ENCODE measurements at regions of chr5 and their contacts with region 1.

Region 1: GRCh38 chr5:149345147-149345875 is at the start of gene GRPEL2:
- DNase-seq: peak; percentile 97
- ATAC-seq: peak; percentile 93
- H3K4me3 Mint-ChIP-seq: peak within 1 kb of the TSS; percentile 95
- H3K27ac Mint-ChIP-seq: peak within 1 kb of the TSS; percentile 98
- H3K4me1 Mint-ChIP-seq: peaks cover 51% of the 10 kb centered on the region
- H3K27me3 Mint-ChIP-seq: no peaks in the 10 kb centered on the region
- CTCF ChIP-seq: no peak
- total RNA-seq, gene GRPEL2: 31.0 to 31.1 TPM

Region 2: DNA sequence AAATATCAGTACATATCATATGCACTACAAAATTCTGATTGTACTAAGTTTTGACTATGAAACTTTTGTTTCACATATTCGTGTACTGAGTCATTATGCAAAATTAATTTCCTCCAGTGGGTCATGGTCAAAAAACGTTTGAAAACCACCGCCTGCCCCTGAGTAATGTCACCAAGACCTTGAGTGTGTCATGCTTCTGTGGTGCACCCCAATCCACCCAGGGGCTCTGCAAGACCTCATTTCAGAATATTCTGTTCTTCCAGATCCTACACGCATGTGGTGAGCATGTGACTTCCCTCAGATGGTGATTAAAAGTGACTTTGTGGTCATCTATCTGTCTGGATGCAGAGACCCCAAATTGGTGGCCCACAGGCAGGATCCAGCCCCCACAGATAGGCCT is 173.1 kb before region 1 on chr5:
- CTCF ChIA-PET with region 1: no interaction called
- POLR2A ChIA-PET with region 1: no interaction called
- intact Hi-C with region 1: no loop called
- DNase-seq: peak; percentile 30
- ATAC-seq: no peak
- H3K4me3 Mint-ChIP-seq: no peak overlapping the region
- H3K27ac Mint-ChIP-seq: no peak overlapping the region
- H3K4me1 Mint-ChIP-seq: no peaks in the 10 kb centered on the region
- H3K27me3 Mint-ChIP-seq: peaks cover 16% of the 10 kb centered on the region
- CTCF ChIP-seq: no peak

Region 3: GRCh38 chr5:149304195-149305078 is 40.9 kb before region 1 on chr5:
- CTCF ChIA-PET with region 1: no interaction called
- POLR2A ChIA-PET with region 1: no interaction called
- intact Hi-C with region 1: no loop called
- DNase-seq: no peak
- ATAC-seq: no peak
- H3K4me3 Mint-ChIP-seq: no peak overlapping the region
- H3K27ac Mint-ChIP-seq: no peak overlapping the region
- H3K4me1 Mint-ChIP-seq: no peaks in the 10 kb centered on the region
- H3K27me3 Mint-ChIP-seq: no peaks in the 10 kb centered on the region
- CTCF ChIP-seq: no peak

Region 4: GRCh38 chr5:149357370-149358293 is 12.3 kb after region 1 on chr5 and contains the start of gene PCYOX1L:
- CTCF ChIA-PET with region 1: interaction called, 13 read pairs
- POLR2A ChIA-PET with region 1: interaction called, 82 read pairs
- intact Hi-C with region 1: no loop called
- DNase-seq: peak; percentile 95
- ATAC-seq: peak; percentile 99
- H3K4me3 Mint-ChIP-seq: peak within 1 kb of the TSS; percentile 96
- H3K27ac Mint-ChIP-seq: peak within 1 kb of the TSS; percentile 87
- H3K4me1 Mint-ChIP-seq: peaks cover 57% of the 10 kb centered on the region
- H3K27me3 Mint-ChIP-seq: no peaks in the 10 kb centered on the region
- CTCF ChIP-seq: no peak
- total RNA-seq, gene PCYOX1L: 19.7 to 21.2 TPM

Region 5: DNA sequence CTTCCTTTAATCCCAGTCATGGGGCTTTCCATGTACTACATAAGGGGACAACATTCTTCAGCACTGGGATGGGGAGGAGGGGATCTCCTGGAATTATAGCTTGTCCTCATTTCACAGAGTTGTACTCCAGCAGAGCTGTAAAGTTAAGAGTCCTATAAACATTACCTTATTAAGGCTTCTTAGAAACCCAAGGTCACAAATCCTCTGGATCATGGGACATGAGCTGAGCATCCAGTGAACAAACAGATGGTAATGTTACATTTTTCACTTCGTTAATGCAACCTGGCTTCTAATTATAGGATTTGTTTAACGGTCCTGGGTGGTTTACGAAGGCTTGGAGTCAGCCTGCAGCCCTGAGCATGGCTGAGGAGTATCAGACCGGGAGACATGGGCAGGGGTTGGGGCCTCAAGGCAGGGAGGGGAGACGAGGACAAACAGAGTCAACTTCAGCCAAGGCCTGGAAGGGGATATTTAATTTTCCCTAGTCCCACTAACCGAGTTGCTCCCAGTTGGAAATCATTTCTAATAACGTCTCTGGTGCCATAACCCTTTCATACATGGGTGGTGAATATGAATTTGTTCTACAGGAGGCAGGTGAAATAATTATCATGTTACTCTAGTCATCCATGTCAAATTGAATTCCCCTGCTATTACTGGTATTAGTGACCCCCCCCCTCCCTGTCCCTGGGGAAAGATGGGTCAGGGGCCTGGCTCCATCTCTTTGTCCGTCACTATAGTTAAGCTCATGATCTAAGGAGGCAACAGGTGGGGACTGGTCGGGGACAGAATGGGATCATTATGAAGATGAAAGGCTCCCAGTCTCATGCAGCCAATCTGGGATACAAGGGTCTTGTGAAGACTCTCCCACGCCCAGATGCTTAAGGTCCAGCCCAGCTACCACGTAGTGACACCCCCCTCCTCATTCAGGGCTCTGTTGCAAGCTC is 44.5 kb after region 1 on chr5:
- CTCF ChIA-PET with region 1: no interaction called
- POLR2A ChIA-PET with region 1: no interaction called
- intact Hi-C with region 1: no loop called
- DNase-seq: no peak
- ATAC-seq: no peak
- H3K4me3 Mint-ChIP-seq: no peak overlapping the region
- H3K27ac Mint-ChIP-seq: no peak overlapping the region
- H3K4me1 Mint-ChIP-seq: no peaks in the 10 kb centered on the region
- H3K27me3 Mint-ChIP-seq: no peaks in the 10 kb centered on the region
- CTCF ChIP-seq: no peak

Region 6: GRCh38 chr5:149551200-149552037 is 206.1 kb after region 1 on chr5 and contains the start of gene CSNK1A1:
- CTCF ChIA-PET with region 1: interaction called, 5 read pairs
- POLR2A ChIA-PET with region 1: interaction called, 13 read pairs
- intact Hi-C with region 1: no loop called
- DNase-seq: peak; percentile 99
- ATAC-seq: peak; percentile 90
- H3K4me3 Mint-ChIP-seq: peak within 1 kb of the TSS; percentile 96
- H3K27ac Mint-ChIP-seq: peak within 1 kb of the TSS; percentile 99
- H3K4me1 Mint-ChIP-seq: peaks cover 23% of the 10 kb centered on the region
- H3K27me3 Mint-ChIP-seq: no peaks in the 10 kb centered on the region
- CTCF ChIP-seq: peak; percentile 70
- total RNA-seq, gene CSNK1A1: 154 to 168 TPM